AG04449 (cell line): ENCODE measurements at regions of chr2 and their contacts with region 1.

Region 1: GRCh38 chr2:204133476-204133875 is 196.9 kb downstream of the ICOS start:
- DNase-seq: no peak
- H3K4me3 ChIP-seq: no peak overlapping the region
- CTCF ChIP-seq: no peak

Region 2: DNA sequence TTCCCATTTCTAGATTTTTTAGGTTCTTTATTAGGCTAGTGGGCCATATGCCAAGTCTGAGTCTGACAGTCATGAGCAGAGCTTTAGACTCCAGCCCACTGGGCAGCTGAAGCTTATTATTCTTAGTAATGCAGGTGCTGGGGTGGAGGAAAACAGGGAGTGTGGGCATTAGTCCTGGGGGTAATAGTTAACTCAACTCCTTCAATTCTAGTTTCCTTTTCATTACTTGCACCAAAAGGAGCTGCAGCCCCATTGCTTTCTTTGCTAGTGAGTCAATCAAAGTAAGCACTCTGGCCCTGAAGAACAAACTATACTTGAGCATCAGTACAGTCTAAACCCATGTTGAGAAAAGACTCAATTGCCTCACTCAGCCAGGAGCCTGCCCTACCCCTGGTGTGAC is 161.4 kb before region 1 on chr2:
- CTCF ChIA-PET with region 1: no interaction called
- POLR2A ChIA-PET with region 1: no interaction called
- DNase-seq: no peak
- H3K4me3 ChIP-seq: no peak overlapping the region
- CTCF ChIP-seq: no peak

Region 3: DNA sequence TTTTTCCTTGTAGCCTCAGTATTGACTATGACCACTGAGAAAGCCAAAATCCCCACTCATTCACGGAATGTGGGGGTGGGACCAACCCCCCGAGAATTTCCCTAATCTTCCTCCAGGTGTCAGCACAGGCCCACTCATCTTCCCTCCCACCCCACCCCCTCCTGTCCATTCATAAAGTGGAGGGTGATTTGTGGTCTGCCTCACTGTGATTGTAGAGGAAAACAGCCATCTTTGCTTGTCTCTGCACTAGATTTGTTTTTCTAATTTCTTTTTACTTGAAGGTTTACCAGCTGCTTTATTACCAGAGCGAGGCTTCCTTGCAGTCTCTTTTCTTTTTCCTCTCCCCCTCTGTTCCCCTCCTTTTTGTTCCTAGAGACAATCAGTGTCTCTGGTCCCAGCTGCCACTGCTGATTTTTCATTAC is 25.1 kb before region 1 on chr2:
- CTCF ChIA-PET with region 1: no interaction called
- POLR2A ChIA-PET with region 1: no interaction called
- DNase-seq: no peak
- H3K4me3 ChIP-seq: no peak overlapping the region
- CTCF ChIP-seq: no peak

Region 4: GRCh38 chr2:204145263-204145751 is 11.8 kb after region 1 on chr2:
- CTCF ChIA-PET with region 1: interaction called, 17 read pairs
- POLR2A ChIA-PET with region 1: no interaction called
- DNase-seq: peak; percentile 19
- H3K4me3 ChIP-seq: 0 out of 2 replicates have a peak overlapping the region, but pooled peaks have one; percentile 9
- CTCF ChIP-seq: peak; percentile 90

Region 5: GRCh38 chr2:204282525-204282924 is 149.0 kb after region 1 on chr2:
- CTCF ChIA-PET with region 1: no interaction called
- POLR2A ChIA-PET with region 1: no interaction called
- DNase-seq: no peak
- H3K4me3 ChIP-seq: no peak overlapping the region
- CTCF ChIP-seq: no peak

Region 6: DNA sequence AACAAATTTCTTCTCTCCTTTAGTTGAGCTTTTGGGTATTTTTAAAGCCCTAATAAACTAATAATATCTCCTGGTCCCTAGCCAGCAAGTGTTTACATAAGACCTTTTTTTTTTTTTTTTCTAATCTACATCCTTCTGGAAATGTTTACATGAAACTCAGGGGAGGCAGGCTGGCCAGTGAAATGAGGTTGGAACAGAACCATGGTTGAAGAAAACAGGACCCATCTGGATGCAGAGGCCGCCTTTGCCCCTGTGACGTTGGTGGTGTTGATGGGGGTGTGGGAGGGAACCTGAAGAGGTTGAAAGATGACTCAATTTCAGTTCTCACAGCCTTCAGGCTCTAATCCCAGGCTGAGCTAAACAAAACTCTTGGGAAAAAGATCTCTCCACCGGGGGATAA is 1667.3 kb after region 1 on chr2:
- CTCF ChIA-PET with region 1: no interaction called
- POLR2A ChIA-PET with region 1: no interaction called
- DNase-seq: no peak
- H3K4me3 ChIP-seq: no peak overlapping the region
- CTCF ChIP-seq: no peak